ENCODE measurements at regions of chr6 and their contacts with region 1.

Region 1: DNA sequence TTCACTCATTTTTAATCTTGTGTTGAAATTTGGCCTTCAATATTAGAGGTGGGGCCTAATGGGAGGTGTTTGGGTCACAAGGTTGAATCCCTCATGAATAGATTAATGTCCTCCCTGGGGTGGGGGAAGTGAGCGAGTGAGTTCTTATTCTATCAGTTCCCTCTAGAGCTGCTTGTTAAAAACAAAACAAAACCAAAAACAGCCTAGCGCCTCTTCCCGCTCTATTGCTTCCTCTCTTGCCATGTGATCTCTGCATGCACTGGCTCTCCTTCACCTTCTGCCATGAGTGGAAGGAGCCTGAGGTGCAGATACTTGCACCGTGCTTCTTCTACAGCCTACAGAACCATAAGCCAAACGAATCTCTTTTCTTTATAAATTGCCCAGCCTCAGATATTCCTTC is 89.6 kb upstream of the SLC35F1 start:
- DNase-seq: no peak
- H3K4me3 ChIP-seq: no peak overlapping the region
- CTCF ChIP-seq: no peak
- POLR2A ChIP-seq: no peak

Region 2: DNA sequence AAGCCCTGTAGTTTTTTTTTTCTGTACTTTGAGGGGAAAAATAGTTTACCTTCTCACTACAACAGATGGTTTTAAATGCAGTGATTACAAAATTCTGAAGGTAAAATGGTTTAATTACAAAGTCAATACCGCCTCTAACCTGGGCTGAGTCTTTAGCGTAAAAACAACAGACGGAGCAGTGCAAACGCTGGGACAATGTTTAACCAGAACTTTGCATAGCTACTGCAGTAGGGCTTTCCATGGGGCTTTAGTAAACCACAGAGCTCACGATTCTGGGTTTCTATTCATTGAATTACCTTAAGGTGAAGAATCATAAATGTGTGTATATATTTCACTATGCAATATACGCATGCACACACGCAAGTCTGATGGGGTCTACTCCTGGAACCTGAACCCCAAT is 862.6 kb before region 1 on chr6:
- intact Hi-C with region 1: no loop called
- DNase-seq: no peak
- H3K4me3 ChIP-seq: no peak overlapping the region
- CTCF ChIP-seq: no peak
- POLR2A ChIP-seq: no peak

Region 3: GRCh38 chr6:117795248-117795647 is 22.3 kb before region 1 on chr6:
- intact Hi-C with region 1: loop called (anchors 1 kb)
- DNase-seq: no peak
- H3K4me3 ChIP-seq: no peak overlapping the region
- CTCF ChIP-seq: no peak
- POLR2A ChIP-seq: no peak